PC-9 (cell line): ENCODE measurements at regions of chr10 and their contacts with region 1.

Region 1: GRCh38 chr10:114714281-114714741 is 56.2 kb upstream of the ABLIM1 start:
- DNase-seq: peak; percentile 61 to 91
- H3K4me3 ChIP-seq: no peak overlapping the region
- H3K27ac ChIP-seq: peak overlapping the region; percentile 55
- H3K4me1 ChIP-seq: peaks cover 60% of the 10 kb centered on the region
- H3K27me3 ChIP-seq: no peaks in the 10 kb centered on the region
- CTCF ChIP-seq: no peak

Region 2: DNA sequence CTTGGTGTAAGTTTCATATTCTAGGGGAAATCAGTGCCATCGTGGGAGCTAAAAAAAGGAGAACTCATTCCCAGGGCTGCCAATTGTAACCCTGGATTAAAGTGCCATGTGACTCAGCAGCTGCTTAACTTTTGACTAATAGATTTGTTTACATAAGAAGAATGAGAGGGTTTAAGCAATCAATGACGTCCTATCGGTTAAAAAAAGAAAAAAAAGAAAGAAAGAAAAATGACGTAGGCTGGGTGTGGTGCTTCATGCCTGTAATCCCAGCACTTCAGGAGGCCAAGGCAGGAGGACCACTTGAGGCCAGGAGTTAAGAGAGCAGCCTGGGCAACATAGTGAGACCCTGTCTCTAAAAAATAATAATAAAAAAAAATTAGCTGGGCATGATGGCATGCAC is 193.9 kb before region 1 on chr10:
- CTCF ChIA-PET with region 1: no interaction called
- POLR2A ChIA-PET with region 1: no interaction called
- intact Hi-C with region 1: no loop called
- DNase-seq: peak in 1 of 2 experiments; percentile 92
- H3K4me3 ChIP-seq: no peak overlapping the region
- H3K27ac ChIP-seq: peak overlapping the region; percentile 93
- H3K4me1 ChIP-seq: peaks cover 58% of the 10 kb centered on the region
- H3K27me3 ChIP-seq: no peaks in the 10 kb centered on the region
- CTCF ChIP-seq: no peak

Region 3: DNA sequence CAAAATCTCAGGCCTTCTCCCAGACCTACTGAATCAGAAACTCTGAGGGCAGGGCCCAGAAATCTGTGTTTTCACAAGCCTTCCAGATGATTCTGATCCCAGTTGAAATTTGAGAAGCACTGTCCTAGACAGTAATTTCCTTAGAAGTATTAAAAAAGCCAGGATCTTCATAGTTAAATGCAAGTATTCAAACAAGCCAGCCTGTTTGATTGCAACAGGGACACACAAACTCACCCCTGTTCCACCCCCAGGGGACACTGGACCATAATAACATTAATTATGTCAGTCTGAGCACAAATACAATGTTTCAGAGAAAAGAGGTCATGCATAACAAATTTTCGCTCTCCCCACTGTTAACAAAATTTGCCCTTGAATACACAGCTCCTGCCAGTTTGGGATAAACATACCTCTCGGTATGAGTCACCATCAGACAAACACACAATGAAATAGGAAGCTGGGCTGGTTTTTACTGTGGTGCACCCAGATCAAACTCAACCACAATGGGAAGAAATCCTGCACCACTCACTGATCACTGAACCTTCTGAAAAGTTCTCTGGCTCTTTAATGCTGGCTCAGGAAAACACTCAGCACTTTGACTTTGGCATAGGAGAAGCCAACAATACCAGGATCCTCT is 90.5 kb before region 1 on chr10:
- CTCF ChIA-PET with region 1: no interaction called
- POLR2A ChIA-PET with region 1: interaction called, 4 read pairs
- intact Hi-C with region 1: loop called (anchors 2 kb)
- DNase-seq: peak; percentile 52 to 96
- H3K4me3 ChIP-seq: no peak overlapping the region
- H3K27ac ChIP-seq: peak overlapping the region; percentile 91
- H3K4me1 ChIP-seq: peaks cover 62% of the 10 kb centered on the region
- H3K27me3 ChIP-seq: no peaks in the 10 kb centered on the region
- CTCF ChIP-seq: no peak

Region 4: DNA sequence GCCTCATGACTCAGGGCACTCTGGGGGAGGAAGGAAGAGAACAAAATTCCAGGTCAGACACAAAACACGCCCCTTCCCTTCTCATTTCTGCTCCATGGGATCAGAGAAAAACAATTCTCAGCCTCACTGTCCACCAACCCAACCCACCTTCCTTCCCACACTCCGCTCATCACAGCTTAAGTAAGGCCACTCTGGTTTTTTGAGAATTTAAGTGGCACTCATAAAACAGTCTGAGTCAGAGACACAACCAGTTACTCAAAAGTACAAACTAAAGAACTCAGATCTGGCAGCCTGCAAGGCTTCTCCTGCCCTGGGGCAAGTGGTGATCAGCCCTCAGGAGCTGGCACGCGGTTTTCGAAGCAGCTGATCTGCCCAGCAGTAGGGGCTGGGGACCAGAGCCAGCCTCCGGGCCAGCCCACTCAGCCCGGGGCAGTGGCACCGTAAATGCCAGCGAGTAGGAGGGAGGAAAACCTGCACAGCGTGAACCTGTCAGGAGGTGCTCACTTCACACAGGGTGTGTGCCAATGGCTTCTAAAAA is 17.2 kb before region 1 on chr10:
- CTCF ChIA-PET with region 1: no interaction called
- POLR2A ChIA-PET with region 1: no interaction called
- intact Hi-C with region 1: loop called (anchors 1 kb)
- DNase-seq: peak; percentile 78 to 92
- H3K4me3 ChIP-seq: peak overlapping the region; percentile 23; the same call in 1 of the 2 replicates
- H3K27ac ChIP-seq: peak overlapping the region; percentile 64
- H3K4me1 ChIP-seq: peaks cover 33% of the 10 kb centered on the region
- H3K27me3 ChIP-seq: no peaks in the 10 kb centered on the region
- CTCF ChIP-seq: no peak

Region 5: GRCh38 chr10:114754445-114755320 is 40.4 kb after region 1 on chr10:
- CTCF ChIA-PET with region 1: no interaction called
- POLR2A ChIA-PET with region 1: no interaction called
- intact Hi-C with region 1: loop called (anchors 5 kb)
- DNase-seq: peak; percentile 44 to 80
- H3K4me3 ChIP-seq: peak overlapping the region; percentile 29; the same call in 1 of the 2 replicates
- H3K27ac ChIP-seq: peak overlapping the region; percentile 92
- H3K4me1 ChIP-seq: peaks cover 28% of the 10 kb centered on the region
- H3K27me3 ChIP-seq: no peaks in the 10 kb centered on the region
- CTCF ChIP-seq: no peak

Region 6: GRCh38 chr10:114767101-114767985 is 53.0 kb after region 1 on chr10:
- CTCF ChIA-PET with region 1: no interaction called
- POLR2A ChIA-PET with region 1: no interaction called
- intact Hi-C with region 1: loop called (anchors 5 kb)
- DNase-seq: no peak
- H3K4me3 ChIP-seq: peak overlapping the region; percentile 71
- H3K27ac ChIP-seq: no peak overlapping the region
- H3K4me1 ChIP-seq: peaks cover 16% of the 10 kb centered on the region
- H3K27me3 ChIP-seq: no peaks in the 10 kb centered on the region
- CTCF ChIP-seq: no peak

Region 7: GRCh38 chr10:114779803-114780609 is 65.7 kb after region 1 on chr10:
- CTCF ChIA-PET with region 1: interaction called, 6 read pairs
- POLR2A ChIA-PET with region 1: no interaction called
- intact Hi-C with region 1: loop called (anchors 5 kb)
- DNase-seq: peak in 1 of 2 experiments; percentile 81
- H3K4me3 ChIP-seq: no peak overlapping the region
- H3K27ac ChIP-seq: peak overlapping the region; percentile 74
- H3K4me1 ChIP-seq: peaks cover 22% of the 10 kb centered on the region
- H3K27me3 ChIP-seq: no peaks in the 10 kb centered on the region
- CTCF ChIP-seq: no peak

Region 8: DNA sequence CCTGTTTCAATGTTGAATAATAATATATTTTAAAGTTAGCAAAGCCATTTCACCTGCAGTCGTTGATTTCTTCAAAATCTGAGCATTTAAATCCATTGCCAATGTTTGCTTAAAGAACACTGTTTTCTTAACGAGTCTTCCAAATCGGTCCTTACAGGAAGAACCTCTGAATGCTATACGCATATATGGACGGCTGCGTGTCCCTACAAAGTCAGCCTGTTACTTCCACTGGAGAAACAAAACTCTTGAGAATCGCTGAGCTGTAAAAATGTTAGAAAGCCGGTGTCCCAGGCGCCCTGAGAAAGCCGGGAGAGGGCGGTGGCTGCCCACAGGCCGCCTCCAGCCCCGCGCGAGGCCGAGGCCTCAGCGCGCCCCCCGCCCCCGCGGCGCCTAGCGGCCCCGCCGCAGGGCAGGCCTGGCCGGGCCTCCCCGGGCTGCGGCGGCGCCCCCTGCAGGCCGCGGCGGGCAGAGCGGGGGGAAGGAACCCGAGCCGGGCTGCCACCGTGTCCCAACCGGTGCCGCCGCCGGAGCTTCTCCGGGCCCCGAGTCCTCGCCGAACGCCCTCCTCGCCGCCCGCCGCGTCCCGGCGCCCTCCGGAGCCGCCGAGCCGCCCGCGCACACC is 107.1 kb after region 1 on chr10 and contains the start of gene FHIP2A:
- CTCF ChIA-PET with region 1: interaction called, 23 read pairs
- POLR2A ChIA-PET with region 1: interaction called, 6 read pairs
- intact Hi-C with region 1: no loop called
- DNase-seq: peak in 1 of 2 experiments; percentile 75
- H3K4me3 ChIP-seq: peak within 1 kb of the TSS; percentile 82
- H3K27ac ChIP-seq: peak within 1 kb of the TSS; percentile 97
- H3K4me1 ChIP-seq: peaks cover 29% of the 10 kb centered on the region
- H3K27me3 ChIP-seq: no peaks in the 10 kb centered on the region
- CTCF ChIP-seq: 0 out of 2 replicates have a peak, but pooled peaks have one; percentile 24
- total RNA-seq, gene FHIP2A: 16.0 and 18.3 TPM in 2 replicates